ENCODE measurements at regions of chr3 and their contacts with region 1.

Region 1: DNA sequence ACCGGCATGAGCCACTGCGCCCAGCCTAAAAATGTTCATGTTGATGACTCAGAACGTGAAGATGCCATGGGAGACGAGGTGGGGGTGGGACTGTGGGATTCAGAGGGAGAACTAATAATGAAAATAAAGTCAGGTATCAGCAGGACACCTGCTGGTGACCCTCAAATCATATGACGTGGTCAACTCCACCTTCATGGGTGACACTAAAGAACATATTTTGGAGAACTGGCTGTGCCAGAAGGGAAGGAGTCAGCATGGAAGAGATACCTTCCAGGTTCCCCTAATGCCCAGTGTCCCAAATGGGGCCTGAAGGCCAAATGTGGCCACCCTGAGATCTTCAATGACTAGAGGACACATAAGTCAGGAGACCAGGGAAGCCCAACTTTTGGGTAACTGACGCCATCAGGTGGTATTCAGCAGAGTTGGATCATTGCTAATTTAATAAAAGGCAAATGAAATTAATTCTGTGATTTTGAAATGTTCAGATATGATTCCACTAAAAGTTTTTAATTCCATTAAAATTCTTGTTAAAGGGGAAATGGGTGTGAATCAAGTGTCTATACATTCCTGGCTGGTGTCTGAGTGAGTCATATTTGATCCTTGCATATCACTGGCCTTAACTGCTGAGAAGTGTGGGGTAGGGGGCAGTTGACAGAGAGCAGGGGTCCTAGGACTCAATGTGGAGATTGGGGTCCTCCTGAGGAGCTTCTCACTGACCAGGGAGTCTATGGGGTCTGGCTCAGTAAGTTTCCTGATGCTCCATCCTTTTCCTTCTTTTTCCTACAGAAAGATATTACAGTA is 88.7 kb upstream of the GSK3B start:
- DNase-seq: no peak
- ATAC-seq: no peak
- H3K4me3 ChIP-seq: no peak overlapping the region
- H3K4me3 Mint-ChIP-seq: no peak overlapping the region
- H3K27ac ChIP-seq: no peak overlapping the region
- H3K27ac Mint-ChIP-seq: no peak overlapping the region
- H3K4me1 ChIP-seq: no peaks in the 10 kb centered on the region
- H3K4me1 Mint-ChIP-seq: no peaks in the 10 kb centered on the region
- H3K27me3 ChIP-seq: no peaks in the 10 kb centered on the region
- H3K27me3 Mint-ChIP-seq: peaks cover 11 to 17% (median 15%) of the 10 kb centered on the region in 5 donors

Region 2: GRCh38 chr3:119140466-119140865 is 1042.5 kb before region 1 on chr3:
- CTCF ChIA-PET with region 1: no interaction called
- POLR2A ChIA-PET with region 1: no interaction called
- intact Hi-C with region 1: no loop called
- DNase-seq: no peak
- ATAC-seq: no peak
- H3K4me3 ChIP-seq: no peak overlapping the region
- H3K4me3 Mint-ChIP-seq: no peak overlapping the region
- H3K27ac ChIP-seq: no peak overlapping the region
- H3K27ac Mint-ChIP-seq: no peak overlapping the region
- H3K4me1 ChIP-seq: no peaks in the 10 kb centered on the region
- H3K4me1 Mint-ChIP-seq: peaks cover 0 to 5% (median 4%) of the 10 kb centered on the region in 7 donors
- H3K27me3 ChIP-seq: no peaks in the 10 kb centered on the region
- H3K27me3 Mint-ChIP-seq: peaks cover 0 to 2% (median 0%) of the 10 kb centered on the region in 5 donors

Region 3: GRCh38 chr3:119819806-119820205 is 363.1 kb before region 1 on chr3:
- CTCF ChIA-PET with region 1: no interaction called
- POLR2A ChIA-PET with region 1: no interaction called
- intact Hi-C with region 1: loop called in 1 of 2 experiments (anchors 5 kb)
- DNase-seq: no peak
- ATAC-seq: no peak
- H3K4me3 ChIP-seq: no peak overlapping the region
- H3K4me3 Mint-ChIP-seq: no peak overlapping the region
- H3K27ac ChIP-seq: no peak overlapping the region
- H3K27ac Mint-ChIP-seq: no peak overlapping the region
- H3K4me1 ChIP-seq: no peaks in the 10 kb centered on the region
- H3K4me1 Mint-ChIP-seq: peaks cover 0 to 9% (median 4%) of the 10 kb centered on the region in 7 donors
- H3K27me3 ChIP-seq: no peaks in the 10 kb centered on the region
- H3K27me3 Mint-ChIP-seq: no peaks in the 10 kb centered on the region